Sigmoid colon (tissue), 7 donors: ENCODE measurements at regions of chr4 and their contacts with region 1.

Region 1: GRCh38 chr4:1870578-1871443 is at the start of gene NSD2:
- DNase-seq: peak; percentile 93
- H3K4me3 ChIP-seq: peak within 1 kb of the TSS; percentile 73 to 100 (median 96)
- H3K27ac ChIP-seq: peak within 1 kb of the TSS; percentile 99 to 100 (median 100)
- H3K4me1 ChIP-seq: peaks cover 0 to 31% (median 24%) of the 10 kb centered on the region in 4 donors
- H3K27me3 ChIP-seq: peaks cover 0 to 16% (median 10%) of the 10 kb centered on the region in 3 donors
- CTCF ChIP-seq: no peak
- EP300 ChIP-seq: no peak
- POLR2A ChIP-seq: peak; percentile 37 to 67
- total RNA-seq, gene NSD2: 33.9 to 56.5 (median 38.0) TPM

Region 2: GRCh38 chr4:1579901-1580691 is 290.7 kb before region 1 on chr4:
- intact Hi-C with region 1: no loop called
- DNase-seq: peak; percentile 97
- H3K4me3 ChIP-seq: peak overlapping the region; percentile 42 to 73 (median 56)
- H3K27ac ChIP-seq: peak overlapping the region; percentile 71 to 85 (median 79)
- H3K4me1 ChIP-seq: peaks cover 0 to 26% (median 24%) of the 10 kb centered on the region in 4 donors
- H3K27me3 ChIP-seq: peaks cover 6 to 33% (median 28%) of the 10 kb centered on the region in 3 donors
- CTCF ChIP-seq: no peak
- EP300 ChIP-seq: no peak
- POLR2A ChIP-seq: peak; percentile 14 to 24

Region 3: GRCh38 chr4:1856042-1856788 is 14.6 kb before region 1 on chr4 and contains the start of gene LETM1:
- intact Hi-C with region 1: loop called (anchors 1 kb)
- DNase-seq: peak; percentile 98
- H3K4me3 ChIP-seq: peak within 1 kb of the TSS; percentile 70 to 90 (median 76)
- H3K27ac ChIP-seq: peak within 1 kb of the TSS; percentile 83 to 87 (median 86)
- H3K4me1 ChIP-seq: peaks cover 0 to 34% (median 29%) of the 10 kb centered on the region in 4 donors
- H3K27me3 ChIP-seq: no peaks in the 10 kb centered on the region
- CTCF ChIP-seq: peak in 1 of 4 experiments; percentile 0
- EP300 ChIP-seq: no peak
- POLR2A ChIP-seq: peak; percentile 34 to 41
- total RNA-seq, gene LETM1: 15.0 to 22.4 (median 17.8) TPM